ENCODE measurements at regions of chr17 and their contacts with region 1.

Region 1: GRCh38 chr17:4789901-4790704 is 1.3 kb downstream of the GLTPD2 start:
- DNase-seq: peak; percentile 69
- ATAC-seq: peak; percentile 82
- H3K4me3 ChIP-seq: peak overlapping the region; percentile 89 to 94 (median 91)
- H3K27ac ChIP-seq: peak overlapping the region; percentile 96
- H3K4me1 ChIP-seq: peaks cover 28% of the 10 kb centered on the region
- H3K27me3 ChIP-seq: no peaks in the 10 kb centered on the region; a peak in 1 of 5 replicates
- CTCF ChIP-seq: peak; percentile 84
- EP300 ChIP-seq: no peak
- POLR2A ChIP-seq: peak; percentile 56 to 67; a peak in 3 of 4 replicates
- RAD21 ChIP-seq: peak; percentile 98

Region 2: GRCh38 chr17:4703330-4703691 is 86.8 kb before region 1 on chr17:
- CTCF ChIA-PET with region 1: no interaction called
- POLR2A ChIA-PET with region 1: interaction called, 107 read pairs
- in situ Hi-C with region 1: no loop called
- intact Hi-C with region 1: no loop called
- DNase-seq: no peak
- ATAC-seq: no peak
- H3K4me3 ChIP-seq: peak overlapping the region; percentile 95 to 99 (median 95)
- H3K27ac ChIP-seq: peak overlapping the region; percentile 79
- H3K4me1 ChIP-seq: peaks cover 52% of the 10 kb centered on the region
- H3K27me3 ChIP-seq: no peaks in the 10 kb centered on the region; a peak in 1 of 5 replicates
- CTCF ChIP-seq: no peak
- EP300 ChIP-seq: no peak
- POLR2A ChIP-seq: no peak
- RAD21 ChIP-seq: no peak

Region 3: DNA sequence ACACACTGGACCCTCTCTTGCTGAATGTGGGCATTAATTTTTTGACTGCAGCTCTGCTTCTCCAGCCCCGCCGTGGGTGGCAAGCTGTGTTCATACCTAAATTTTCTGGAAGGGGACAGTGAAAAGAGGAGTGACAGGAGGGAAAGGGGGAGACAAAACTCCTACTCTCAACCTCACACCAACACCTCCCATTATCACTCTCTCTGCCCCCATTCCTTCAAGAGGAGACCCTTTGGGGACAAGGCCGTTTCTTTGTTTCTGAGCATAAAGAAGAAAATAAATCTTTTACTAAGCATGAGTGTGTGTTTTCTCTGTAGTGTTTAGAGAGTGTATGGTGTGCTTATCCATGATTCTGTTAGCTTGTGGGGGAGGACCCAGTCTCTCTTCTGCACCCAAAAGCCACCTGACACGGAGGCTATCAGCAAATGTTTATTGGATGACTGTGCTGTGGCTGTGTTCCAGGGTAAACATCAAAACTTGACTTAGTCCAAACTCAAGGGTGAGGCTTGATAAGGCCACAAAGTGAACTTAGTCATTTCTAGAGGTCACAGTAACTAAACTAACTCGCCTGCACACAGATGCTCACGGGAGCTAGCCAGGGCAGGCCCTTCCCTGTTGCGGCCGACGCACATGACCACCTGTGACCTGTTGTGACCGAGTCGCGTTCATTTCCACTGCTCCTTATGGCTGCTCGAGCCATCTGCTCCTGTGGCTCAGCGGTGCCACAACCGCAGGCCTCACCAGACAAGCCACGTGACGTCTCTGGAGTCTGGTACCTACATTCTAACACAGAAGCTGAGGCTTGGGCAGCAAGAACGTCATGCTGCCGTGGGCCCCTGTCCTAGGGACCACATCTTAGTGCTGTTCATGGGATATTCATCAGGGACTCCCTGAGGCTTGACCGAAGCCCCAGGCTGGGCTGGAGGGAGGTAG is 68.6 kb before region 1 on chr17:
- CTCF ChIA-PET with region 1: no interaction called
- POLR2A ChIA-PET with region 1: interaction called, 63 read pairs
- in situ Hi-C with region 1: no loop called
- intact Hi-C with region 1: no loop called
- DNase-seq: peak; percentile 95
- ATAC-seq: peak; percentile 90
- H3K4me3 ChIP-seq: peak overlapping the region in 1 of 3 experiments; percentile 58; a peak in 3 of 6 replicates
- H3K27ac ChIP-seq: peak overlapping the region; percentile 68
- H3K4me1 ChIP-seq: peaks cover 35% of the 10 kb centered on the region
- H3K27me3 ChIP-seq: no peaks in the 10 kb centered on the region
- CTCF ChIP-seq: no peak
- EP300 ChIP-seq: peak in 1 of 2 experiments; percentile 85; a peak in 2 of 4 replicates
- POLR2A ChIP-seq: peak; percentile 50 to 69; a peak in 3 of 4 replicates
- RAD21 ChIP-seq: 0 out of 2 replicates have a peak, but pooled peaks have one; percentile 12

Region 4: GRCh38 chr17:4739122-4740024 is 50.7 kb before region 1 on chr17 and contains the starts of genes CXCL16 and ZMYND15:
- CTCF ChIA-PET with region 1: no interaction called
- POLR2A ChIA-PET with region 1: interaction called, 110 read pairs
- in situ Hi-C with region 1: loop called (anchors 10 kb)
- intact Hi-C with region 1: no loop called
- DNase-seq: no peak
- ATAC-seq: peak; percentile 57
- H3K4me3 ChIP-seq: peak within 1 kb of the TSS; percentile 75 to 88 (median 78)
- H3K27ac ChIP-seq: no peak within 1 kb of the TSS
- H3K4me1 ChIP-seq: peaks cover 74% of the 10 kb centered on the region
- H3K27me3 ChIP-seq: peaks cover 2 to 24% of the 10 kb centered on the region in 2 experiments; a peak in 3 of 5 replicates
- CTCF ChIP-seq: peak; percentile 29
- EP300 ChIP-seq: no peak
- POLR2A ChIP-seq: peak in 1 of 2 experiments; percentile 47; a peak in 1 of 4 replicates
- RAD21 ChIP-seq: no peak; the same call in 1 of the 2 replicates
- total RNA-seq, gene CXCL16: 5.4 and 9.4 TPM in 2 replicates
- total RNA-seq, gene ZMYND15: 0.15 and 0.24 TPM in 2 replicates

Region 5: DNA sequence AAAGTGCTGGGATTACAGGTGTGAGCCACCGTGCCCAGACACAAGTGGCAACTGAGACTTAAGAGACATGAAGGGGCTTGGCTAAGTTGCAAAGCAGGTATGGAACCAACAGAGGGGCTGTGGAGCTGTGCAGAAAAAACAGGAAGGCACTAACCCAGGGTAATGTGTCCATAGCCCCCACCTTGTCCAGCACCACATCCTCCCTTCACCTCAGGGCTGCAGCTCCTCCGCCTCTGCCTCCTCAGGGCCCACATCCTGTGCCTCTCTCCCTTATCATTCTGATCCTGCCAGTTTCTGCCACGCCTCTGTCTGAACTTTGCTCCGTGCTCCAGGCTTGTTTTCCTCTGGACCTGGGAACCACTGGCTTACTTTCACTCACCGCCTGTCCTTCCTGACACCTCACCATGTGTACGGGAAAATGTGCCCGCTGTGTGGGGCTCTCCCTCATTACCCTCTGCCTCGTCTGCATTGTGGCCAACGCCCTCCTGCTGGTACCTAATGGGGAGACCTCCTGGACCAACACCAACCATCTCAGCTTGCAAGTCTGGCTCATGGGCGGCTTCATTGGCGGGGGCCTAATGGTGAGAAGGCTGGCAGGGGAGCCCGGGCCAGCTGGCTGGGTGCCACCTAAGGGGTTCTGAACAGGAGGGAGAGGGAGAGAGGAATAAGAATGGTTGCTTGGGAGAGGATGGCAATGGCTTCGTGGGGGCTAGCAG is 18.4 kb before region 1 on chr17 and contains the start of gene TM4SF5:
- CTCF ChIA-PET with region 1: no interaction called
- POLR2A ChIA-PET with region 1: interaction called, 317 read pairs
- in situ Hi-C with region 1: no loop called
- intact Hi-C with region 1: no loop called
- DNase-seq: peak; percentile 95
- ATAC-seq: peak; percentile 96
- H3K4me3 ChIP-seq: peak within 1 kb of the TSS; percentile 65 to 83 (median 75)
- H3K27ac ChIP-seq: peak within 1 kb of the TSS; percentile 76
- H3K4me1 ChIP-seq: peaks cover 78% of the 10 kb centered on the region
- H3K27me3 ChIP-seq: no peaks in the 10 kb centered on the region; a peak in 1 of 5 replicates
- CTCF ChIP-seq: peak; percentile 41
- EP300 ChIP-seq: peak in 1 of 2 experiments; percentile 84; a peak in 2 of 4 replicates
- POLR2A ChIP-seq: peak; percentile 53 to 96
- RAD21 ChIP-seq: no peak
- total RNA-seq, gene TM4SF5: 15.6 and 30.1 TPM in 2 replicates

Region 6: GRCh38 chr17:4833178-4833940 is 43.3 kb after region 1 on chr17 and contains the start of gene MINK1:
- CTCF ChIA-PET with region 1: no interaction called
- POLR2A ChIA-PET with region 1: interaction called, 31 read pairs
- in situ Hi-C with region 1: no loop called
- intact Hi-C with region 1: no loop called
- DNase-seq: peak; percentile 84
- ATAC-seq: peak; percentile 78
- H3K4me3 ChIP-seq: peak within 1 kb of the TSS; percentile 67 to 97 (median 85)
- H3K27ac ChIP-seq: peak within 1 kb of the TSS; percentile 75
- H3K4me1 ChIP-seq: peaks cover 41% of the 10 kb centered on the region
- H3K27me3 ChIP-seq: no peaks in the 10 kb centered on the region
- CTCF ChIP-seq: no peak
- EP300 ChIP-seq: no peak
- POLR2A ChIP-seq: peak in 1 of 2 experiments; percentile 78; a peak in 3 of 4 replicates
- RAD21 ChIP-seq: 0 out of 2 replicates have a peak, but pooled peaks have one; percentile 10
- total RNA-seq, gene MINK1: 15.2 and 17.2 TPM in 2 replicates

Region 7: DNA sequence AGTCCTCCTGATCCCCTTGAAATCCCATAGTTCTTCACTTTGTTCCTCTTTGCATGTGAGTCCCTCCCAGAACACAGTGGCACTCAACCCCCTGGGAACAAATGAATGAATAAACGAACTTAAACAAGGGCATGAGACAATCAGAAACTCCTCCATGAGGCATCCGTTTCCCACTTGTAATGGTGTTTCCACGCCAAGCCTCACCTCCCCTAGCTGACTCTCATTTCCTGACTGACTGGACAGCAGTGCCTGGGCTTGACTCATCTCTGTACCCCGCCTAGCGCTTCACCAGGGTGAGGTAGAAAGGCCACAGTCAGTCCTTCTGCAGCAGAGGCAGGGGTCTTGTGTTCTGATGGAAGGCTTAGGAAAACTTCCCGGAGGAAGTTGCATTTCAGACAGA is 221.8 kb after region 1 on chr17:
- CTCF ChIA-PET with region 1: no interaction called
- POLR2A ChIA-PET with region 1: no interaction called
- in situ Hi-C with region 1: no loop called
- intact Hi-C with region 1: no loop called
- DNase-seq: no peak
- ATAC-seq: no peak
- H3K4me3 ChIP-seq: no peak overlapping the region
- H3K27ac ChIP-seq: no peak overlapping the region
- H3K4me1 ChIP-seq: no peaks in the 10 kb centered on the region
- H3K27me3 ChIP-seq: no peaks in the 10 kb centered on the region
- CTCF ChIP-seq: no peak
- EP300 ChIP-seq: no peak
- POLR2A ChIP-seq: no peak
- RAD21 ChIP-seq: no peak

Region 8: DNA sequence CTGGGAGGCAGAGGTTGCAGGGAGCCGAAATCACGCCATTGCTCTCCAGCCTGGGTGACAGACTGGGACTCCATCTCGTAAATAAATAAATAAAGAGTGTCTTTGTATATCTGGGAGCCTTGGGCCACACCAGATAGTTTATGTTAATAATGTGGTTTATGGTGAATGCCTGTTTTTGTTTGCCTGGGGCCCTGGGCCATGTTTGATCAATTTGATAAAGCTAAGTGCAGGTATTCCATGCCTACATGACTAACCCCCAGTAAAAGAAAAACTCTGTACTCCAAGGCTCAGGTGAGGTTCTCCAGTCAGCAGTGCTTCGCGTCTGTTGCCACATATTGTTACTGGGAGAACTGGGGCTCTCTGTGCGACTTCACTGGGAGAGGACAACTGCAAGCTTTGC is 429.4 kb after region 1 on chr17:
- CTCF ChIA-PET with region 1: no interaction called
- POLR2A ChIA-PET with region 1: no interaction called
- in situ Hi-C with region 1: no loop called
- intact Hi-C with region 1: no loop called
- DNase-seq: no peak
- ATAC-seq: no peak
- H3K4me3 ChIP-seq: no peak overlapping the region
- H3K27ac ChIP-seq: no peak overlapping the region
- H3K4me1 ChIP-seq: peaks cover 12% of the 10 kb centered on the region
- H3K27me3 ChIP-seq: no peaks in the 10 kb centered on the region; a peak in 1 of 5 replicates
- CTCF ChIP-seq: no peak
- EP300 ChIP-seq: no peak
- POLR2A ChIP-seq: no peak
- RAD21 ChIP-seq: no peak

Measured in HepG2 (cell line).